WTC11 (cell line): ENCODE measurements at regions of chr1 and their contacts with region 1.

Region 1: GRCh38 chr1:178501705-178502329 is 5.1 kb upstream of the CLEC20A start:
- DNase-seq: peak; percentile 92
- ATAC-seq: peak; percentile 85
- H3K4me3 Mint-ChIP-seq: no peak overlapping the region
- H3K27ac Mint-ChIP-seq: no peak overlapping the region
- H3K4me1 Mint-ChIP-seq: peaks cover 13% of the 10 kb centered on the region
- H3K27me3 Mint-ChIP-seq: no peaks in the 10 kb centered on the region
- CTCF ChIP-seq: peak; percentile 97

Region 2: GRCh38 chr1:178037503-178038253 is 464.1 kb before region 1 on chr1:
- CTCF ChIA-PET with region 1: interaction called, 14 read pairs
- POLR2A ChIA-PET with region 1: no interaction called
- DNase-seq: peak; percentile 85
- ATAC-seq: peak; percentile 94
- H3K4me3 Mint-ChIP-seq: peak overlapping the region; percentile 58
- H3K27ac Mint-ChIP-seq: no peak overlapping the region
- H3K4me1 Mint-ChIP-seq: peaks cover 17% of the 10 kb centered on the region
- H3K27me3 Mint-ChIP-seq: peaks cover 2% of the 10 kb centered on the region; the same call in 1 of the 2 replicates
- CTCF ChIP-seq: peak; percentile 56

Region 3: DNA sequence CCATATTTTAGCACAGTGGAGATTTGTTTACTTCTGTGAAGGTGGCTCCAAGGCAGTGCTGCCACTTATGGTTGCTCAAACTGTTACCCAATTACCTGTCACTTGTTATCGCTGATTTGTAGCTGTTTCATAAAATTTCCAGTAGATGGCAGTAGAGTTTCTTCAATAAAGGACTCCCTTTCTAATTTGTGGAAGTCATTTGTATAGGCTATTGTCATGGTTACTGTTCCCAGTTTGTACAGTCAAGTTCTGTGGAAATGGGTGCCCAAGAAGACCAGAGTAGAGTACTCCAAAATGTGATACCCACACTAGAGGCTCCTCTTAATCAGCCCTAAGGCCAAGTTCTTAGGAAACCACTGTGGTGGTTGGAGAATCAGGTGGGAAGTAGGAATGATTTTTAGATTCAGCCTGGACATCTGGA is 191.1 kb before region 1 on chr1:
- CTCF ChIA-PET with region 1: interaction called, 48 read pairs
- POLR2A ChIA-PET with region 1: no interaction called
- DNase-seq: no peak
- ATAC-seq: peak; percentile 88
- H3K4me3 Mint-ChIP-seq: no peak overlapping the region
- H3K27ac Mint-ChIP-seq: peak overlapping the region; percentile 73; the same call in 1 of the 2 replicates
- H3K4me1 Mint-ChIP-seq: peaks cover 16% of the 10 kb centered on the region
- H3K27me3 Mint-ChIP-seq: no peaks in the 10 kb centered on the region
- CTCF ChIP-seq: peak; percentile 59; the same call in 1 of the 2 replicates

Region 4: DNA sequence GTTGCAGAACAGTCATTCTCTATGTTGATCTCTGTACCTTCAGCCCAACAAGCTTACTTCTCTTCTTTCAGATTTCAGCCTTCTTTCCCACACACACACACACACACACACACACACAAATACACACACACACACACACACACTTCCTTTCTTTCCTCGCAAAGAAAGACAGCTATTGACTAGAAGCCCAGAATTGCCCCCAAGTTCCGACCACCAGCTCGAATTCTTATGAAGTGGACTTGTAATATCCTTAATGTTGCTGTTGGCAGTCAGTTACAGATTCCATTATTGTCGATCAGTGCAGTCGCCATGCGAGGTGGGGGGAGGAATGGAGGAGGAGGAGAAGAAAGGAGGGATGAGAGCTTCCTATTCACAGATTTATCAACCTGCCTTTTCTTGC is 130.6 kb before region 1 on chr1:
- CTCF ChIA-PET with region 1: interaction called, 27 read pairs
- POLR2A ChIA-PET with region 1: no interaction called
- DNase-seq: no peak
- ATAC-seq: peak; percentile 31; the same call in 1 of the 2 replicates
- H3K4me3 Mint-ChIP-seq: no peak overlapping the region
- H3K27ac Mint-ChIP-seq: no peak overlapping the region
- H3K4me1 Mint-ChIP-seq: peaks cover 2% of the 10 kb centered on the region; the same call in 1 of the 2 replicates
- H3K27me3 Mint-ChIP-seq: no peaks in the 10 kb centered on the region
- CTCF ChIP-seq: no peak

Region 5: GRCh38 chr1:178470411-178470960 is 31.3 kb before region 1 on chr1:
- CTCF ChIA-PET with region 1: interaction called, 38 read pairs
- POLR2A ChIA-PET with region 1: no interaction called
- DNase-seq: no peak
- ATAC-seq: peak; percentile 46; the same call in 1 of the 2 replicates
- H3K4me3 Mint-ChIP-seq: no peak overlapping the region
- H3K27ac Mint-ChIP-seq: no peak overlapping the region
- H3K4me1 Mint-ChIP-seq: peaks cover 2% of the 10 kb centered on the region; the same call in 1 of the 2 replicates
- H3K27me3 Mint-ChIP-seq: no peaks in the 10 kb centered on the region
- CTCF ChIP-seq: no peak

Region 6: GRCh38 chr1:178532392-178532791 is 30.6 kb after region 1 on chr1:
- CTCF ChIA-PET with region 1: interaction called, 55 read pairs
- POLR2A ChIA-PET with region 1: no interaction called
- DNase-seq: peak; percentile 88
- ATAC-seq: peak; percentile 89
- H3K4me3 Mint-ChIP-seq: no peak overlapping the region
- H3K27ac Mint-ChIP-seq: no peak overlapping the region
- H3K4me1 Mint-ChIP-seq: 0 out of 2 replicates have a peak, but pooled peaks cover 2% of the 10 kb centered on the region
- H3K27me3 Mint-ChIP-seq: no peaks in the 10 kb centered on the region; the same call in 1 of the 2 replicates
- CTCF ChIP-seq: peak; percentile 96

Region 7: GRCh38 chr1:178664278-178664677 is 162.5 kb after region 1 on chr1:
- CTCF ChIA-PET with region 1: no interaction called
- POLR2A ChIA-PET with region 1: no interaction called
- DNase-seq: no peak
- ATAC-seq: no peak
- H3K4me3 Mint-ChIP-seq: no peak overlapping the region
- H3K27ac Mint-ChIP-seq: no peak overlapping the region
- H3K4me1 Mint-ChIP-seq: no peaks in the 10 kb centered on the region
- H3K27me3 Mint-ChIP-seq: no peaks in the 10 kb centered on the region
- CTCF ChIP-seq: no peak